Endothelial cell of umbilical vein (primary cell): ENCODE measurements at regions of chr10 and their contacts with region 1.

Region 1: DNA sequence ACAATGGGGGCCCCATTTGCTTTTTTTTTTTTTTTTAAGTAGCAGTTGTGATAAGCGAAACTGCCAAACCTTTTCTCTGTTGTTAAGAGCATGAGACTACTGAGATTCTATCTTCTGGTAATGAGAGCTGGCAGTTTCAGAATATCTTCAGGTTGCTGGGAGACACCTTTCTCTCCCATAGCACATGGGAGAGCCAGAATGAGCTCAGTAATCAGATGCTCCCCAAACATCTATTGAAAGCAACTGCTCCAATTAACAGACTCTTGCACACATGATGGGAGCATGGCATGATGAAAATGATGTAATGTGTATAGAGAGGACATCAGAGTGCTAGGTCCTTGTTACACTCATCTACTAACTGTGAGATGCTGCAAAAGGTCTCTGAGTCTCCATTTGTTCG is 18.8 kb downstream of the MYO3A start:
- DNase-seq: no peak
- H3K4me3 ChIP-seq: no peak overlapping the region
- H3K27ac ChIP-seq: no peak overlapping the region
- H3K4me1 ChIP-seq: no peaks in the 10 kb centered on the region
- H3K27me3 ChIP-seq: no peaks in the 10 kb centered on the region
- CTCF ChIP-seq: no peak
- POLR2A ChIP-seq: no peak

Region 2: GRCh38 chr10:25575343-25575742 is 377.5 kb before region 1 on chr10:
- CTCF ChIA-PET with region 1: no interaction called
- POLR2A ChIA-PET with region 1: no interaction called
- dilution Hi-C with region 1: no loop called
- intact Hi-C with region 1: loop called (anchors 5 kb)
- DNase-seq: no peak
- H3K4me3 ChIP-seq: no peak overlapping the region
- H3K27ac ChIP-seq: no peak overlapping the region
- H3K4me1 ChIP-seq: no peaks in the 10 kb centered on the region
- H3K27me3 ChIP-seq: peaks cover 0 to 3% of the 10 kb centered on the region in 2 experiments
- CTCF ChIP-seq: no peak
- POLR2A ChIP-seq: no peak